Endothelial cell of umbilical vein (primary cell): ENCODE measurements at regions of chr2 and their contacts with region 1.

Region 1: DNA sequence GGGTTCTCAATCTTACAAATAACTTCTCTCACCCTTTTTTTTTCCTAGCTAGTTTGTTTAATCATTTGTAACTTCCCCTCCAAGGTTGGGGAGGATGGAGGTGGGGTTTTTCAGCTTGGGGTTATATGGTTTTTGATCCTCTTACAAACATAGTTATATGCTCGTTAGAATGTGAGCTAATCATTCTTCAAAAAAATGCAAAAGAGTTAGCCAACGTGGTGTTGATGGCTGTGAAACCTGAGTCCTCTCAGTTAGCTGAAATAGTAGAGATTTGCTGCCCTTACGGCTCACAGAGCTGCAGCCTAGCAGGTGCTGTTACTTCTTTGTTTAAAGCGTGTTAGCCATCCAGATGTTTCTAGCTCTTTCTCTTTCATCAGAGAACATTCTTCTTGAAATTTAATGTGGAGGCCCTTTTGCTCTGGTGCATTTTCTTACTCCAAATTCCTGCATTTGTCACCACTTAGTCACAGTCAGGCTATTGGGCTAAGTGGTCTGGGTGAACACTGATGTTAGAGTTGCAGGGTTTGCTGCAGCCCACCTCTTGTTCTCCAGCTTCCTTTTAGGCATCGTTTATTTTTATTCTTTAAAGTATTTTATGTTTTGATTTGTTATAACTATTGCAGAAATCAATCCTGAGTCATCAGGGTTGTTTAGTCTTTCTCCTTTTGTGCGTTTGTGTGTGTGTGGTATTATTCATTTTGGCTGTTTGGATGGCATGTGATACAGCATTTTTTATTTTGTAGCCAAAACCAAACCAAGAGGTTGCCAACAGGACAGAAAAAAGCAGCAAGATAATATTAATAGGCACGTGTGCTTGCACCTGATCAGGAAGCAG is 41.1 kb downstream of the LIMS1 start:
- DNase-seq: no peak
- H3K4me3 ChIP-seq: no peak overlapping the region
- H3K27ac ChIP-seq: no peak overlapping the region
- H3K4me1 ChIP-seq: peaks cover 36% of the 10 kb centered on the region
- H3K27me3 ChIP-seq: no peaks in the 10 kb centered on the region
- CTCF ChIP-seq: no peak
- POLR2A ChIP-seq: no peak

Region 2: DNA sequence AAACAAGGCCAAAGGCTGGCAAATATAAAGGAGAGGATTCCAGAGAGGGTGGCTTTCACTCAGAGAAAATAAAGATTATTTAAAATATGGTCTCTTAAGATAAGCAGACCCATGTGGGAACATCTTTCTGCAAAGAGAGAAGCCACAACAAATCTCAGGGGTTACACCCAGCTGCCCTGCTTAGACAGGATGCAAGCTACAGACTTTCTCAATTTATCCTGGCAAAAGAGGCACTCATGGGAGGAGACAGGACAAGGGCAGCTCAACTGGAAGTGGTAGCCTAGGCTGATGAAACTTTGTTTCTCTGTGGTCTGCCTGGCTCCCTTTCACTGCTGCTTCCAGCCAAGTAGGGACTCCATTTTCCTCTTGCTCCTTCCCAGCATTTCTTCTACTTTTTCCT is 223.5 kb before region 1 on chr2:
- CTCF ChIA-PET with region 1: no interaction called
- POLR2A ChIA-PET with region 1: no interaction called
- dilution Hi-C with region 1: no loop called
- intact Hi-C with region 1: loop called (anchors 1 kb)
- DNase-seq: no peak
- H3K4me3 ChIP-seq: no peak overlapping the region
- H3K27ac ChIP-seq: no peak overlapping the region
- H3K4me1 ChIP-seq: no peaks in the 10 kb centered on the region
- H3K27me3 ChIP-seq: peaks cover 15 to 23% of the 10 kb centered on the region in 2 experiments
- CTCF ChIP-seq: no peak
- POLR2A ChIP-seq: no peak

Region 3: GRCh38 chr2:108533832-108534583 is 41.3 kb before region 1 on chr2 and contains the start of gene LIMS1:
- CTCF ChIA-PET with region 1: interaction called, 5 read pairs
- POLR2A ChIA-PET with region 1: interaction called, 9 read pairs
- dilution Hi-C with region 1: no loop called
- intact Hi-C with region 1: loop called (anchors 2 kb)
- DNase-seq: peak; percentile 90
- H3K4me3 ChIP-seq: peak within 1 kb of the TSS; percentile 65 to 84 (median 74)
- H3K27ac ChIP-seq: peak within 1 kb of the TSS; percentile 86
- H3K4me1 ChIP-seq: peaks cover 15% of the 10 kb centered on the region
- H3K27me3 ChIP-seq: no peaks in the 10 kb centered on the region
- CTCF ChIP-seq: no peak
- POLR2A ChIP-seq: peak; percentile 83
- total RNA-seq, gene LIMS1: 153 and 166 TPM in 2 replicates

Region 4: GRCh38 chr2:108542071-108542470 is 33.3 kb before region 1 on chr2:
- CTCF ChIA-PET with region 1: interaction called, 6 read pairs
- POLR2A ChIA-PET with region 1: no interaction called
- dilution Hi-C with region 1: no loop called
- intact Hi-C with region 1: loop called (anchors 2 kb)
- DNase-seq: no peak
- H3K4me3 ChIP-seq: no peak overlapping the region
- H3K27ac ChIP-seq: peak overlapping the region; percentile 50
- H3K4me1 ChIP-seq: peaks cover 20% of the 10 kb centered on the region
- H3K27me3 ChIP-seq: no peaks in the 10 kb centered on the region
- CTCF ChIP-seq: no peak
- POLR2A ChIP-seq: no peak